ENCODE measurements at regions of chr11 and their contacts with region 1.

Region 1: DNA sequence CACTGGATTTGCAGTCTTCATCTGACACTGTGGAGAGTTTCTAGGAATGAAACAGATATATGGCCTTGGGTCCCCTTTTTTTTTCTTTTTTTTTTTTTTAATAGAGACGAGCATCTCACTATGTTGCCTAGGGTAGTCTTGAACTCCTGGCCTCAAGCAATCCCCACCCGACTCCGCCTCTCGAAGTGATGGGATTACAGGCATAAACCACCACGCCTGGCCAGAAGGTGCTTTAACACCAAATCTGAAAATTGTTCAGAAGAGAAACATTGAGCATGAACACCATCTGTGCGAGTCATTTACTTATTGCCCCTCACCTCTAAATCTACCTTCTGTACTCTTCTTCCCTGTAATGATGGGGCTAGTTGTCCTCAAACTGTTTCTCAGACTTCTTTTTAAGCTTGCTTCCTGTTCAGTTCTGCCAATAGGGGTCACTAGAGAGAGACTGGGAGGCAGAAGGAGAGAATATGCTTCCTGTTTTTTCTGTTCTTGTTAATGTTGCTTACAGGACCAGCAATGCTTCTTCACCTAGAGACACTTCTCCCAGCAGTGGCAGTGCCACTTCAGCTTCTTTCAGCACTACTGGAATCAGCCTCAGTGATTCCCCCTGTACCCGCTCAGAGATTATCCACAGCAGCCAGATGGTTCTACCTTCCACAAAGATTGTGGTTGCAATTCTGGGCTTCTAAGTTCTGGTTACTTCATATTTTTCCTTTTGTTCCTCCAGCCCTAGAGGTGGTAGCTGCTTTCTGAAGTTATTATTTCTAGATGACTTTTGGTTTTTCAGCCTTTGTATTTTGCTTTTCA is 20.8 kb upstream of the ZBED5 start:
- DNase-seq: peak; percentile 19
- ATAC-seq: peak; percentile 80
- H3K4me3 ChIP-seq: no peak overlapping the region
- H3K27ac ChIP-seq: no peak overlapping the region
- H3K4me1 ChIP-seq: no peaks in the 10 kb centered on the region
- H3K27me3 ChIP-seq: no peaks in the 10 kb centered on the region
- CTCF ChIP-seq: peak; percentile 42 to 71 (median 64)
- EP300 ChIP-seq: no peak
- POLR2A ChIP-seq: no peak
- RAD21 ChIP-seq: no peak

Region 2: DNA sequence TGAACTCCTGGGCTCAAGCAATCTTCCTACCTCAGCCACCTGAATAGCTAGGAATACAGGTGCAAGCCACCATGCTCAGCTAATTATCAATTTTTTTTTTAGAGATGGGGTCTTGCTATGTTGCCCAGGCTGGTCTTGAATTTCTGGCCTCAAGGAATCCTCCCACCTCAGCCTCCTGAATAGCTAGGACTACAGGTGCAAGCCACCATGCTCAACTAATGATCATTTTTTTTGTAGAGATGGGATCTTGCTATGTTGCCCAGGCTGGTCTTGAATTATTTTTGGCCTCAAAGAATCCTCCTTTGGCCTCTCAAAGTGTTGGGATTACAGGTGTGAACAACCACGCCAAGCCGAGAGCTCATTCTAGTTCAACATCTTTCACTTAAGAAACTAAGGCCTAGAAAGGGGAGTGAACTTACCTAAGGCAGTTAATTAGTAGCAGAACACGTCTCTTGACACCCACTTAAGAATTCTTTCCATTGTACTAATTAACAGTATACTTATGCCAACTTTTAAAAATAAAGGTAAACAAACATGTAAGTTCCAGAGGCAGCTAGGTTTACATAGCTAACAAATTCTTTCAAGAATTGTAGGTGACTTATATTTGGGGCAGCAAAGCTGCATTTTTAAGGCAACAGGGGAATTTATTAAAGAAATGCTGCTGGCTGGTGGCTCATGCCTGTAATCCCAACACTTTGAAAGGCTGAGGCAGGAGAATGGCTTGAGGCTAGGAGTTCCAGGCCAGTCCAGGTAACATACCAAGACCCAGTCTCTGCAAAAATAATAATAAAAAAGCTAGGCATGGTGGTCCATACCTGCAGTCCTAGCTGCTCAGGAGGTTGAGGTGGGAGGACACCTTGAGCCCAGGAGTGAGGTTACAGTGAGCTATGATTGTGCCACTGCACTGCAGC is 30.4 kb before region 1 on chr11:
- CTCF ChIA-PET with region 1: interaction called, 10 read pairs
- POLR2A ChIA-PET with region 1: no interaction called
- RAD21 ChIA-PET with region 1: no interaction called
- SMC1A ChIA-PET with region 1: interaction called, 3 read pairs
- in situ Hi-C with region 1: no loop called
- intact Hi-C with region 1: no loop called
- DNase-seq: no peak
- ATAC-seq: no peak
- H3K4me3 ChIP-seq: no peak overlapping the region
- H3K27ac ChIP-seq: no peak overlapping the region
- H3K4me1 ChIP-seq: no peaks in the 10 kb centered on the region
- H3K27me3 ChIP-seq: no peaks in the 10 kb centered on the region
- CTCF ChIP-seq: no peak
- EP300 ChIP-seq: no peak
- POLR2A ChIP-seq: no peak
- RAD21 ChIP-seq: no peak

Region 3: DNA sequence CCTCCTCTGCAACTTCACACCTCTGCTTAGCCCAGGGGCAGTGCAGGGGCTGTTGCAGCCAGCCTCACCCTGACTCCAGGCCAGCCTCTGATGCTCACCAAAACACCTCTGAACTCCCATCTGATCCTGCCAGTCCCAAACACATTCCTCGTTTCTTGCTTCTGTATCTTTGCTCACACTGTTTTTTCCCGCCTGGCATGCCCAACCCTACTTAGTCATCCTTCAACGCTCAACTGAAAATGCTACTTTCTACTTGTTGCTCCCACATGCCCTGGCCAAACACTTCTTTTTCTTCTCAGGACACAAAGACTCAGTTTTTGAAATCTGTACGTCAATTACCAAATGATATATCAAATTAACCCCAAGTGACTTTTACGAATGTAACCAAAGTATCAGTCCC is 120.1 kb after region 1 on chr11:
- CTCF ChIA-PET with region 1: no interaction called
- POLR2A ChIA-PET with region 1: no interaction called
- RAD21 ChIA-PET with region 1: no interaction called
- SMC1A ChIA-PET with region 1: no interaction called
- in situ Hi-C with region 1: no loop called
- intact Hi-C with region 1: no loop called
- DNase-seq: no peak
- ATAC-seq: no peak
- H3K4me3 ChIP-seq: no peak overlapping the region
- H3K27ac ChIP-seq: no peak overlapping the region
- H3K4me1 ChIP-seq: no peaks in the 10 kb centered on the region
- H3K27me3 ChIP-seq: no peaks in the 10 kb centered on the region; a peak in 4 of 4 replicates
- CTCF ChIP-seq: no peak
- EP300 ChIP-seq: no peak
- POLR2A ChIP-seq: no peak
- RAD21 ChIP-seq: no peak